Left cardiac atrium (tissue), 4 donors: ENCODE measurements at regions of chr11 and their contacts with region 1.

Region 1: GRCh38 chr11:1694064-1694845 is 2.7 kb upstream of the KRTAP5-6 start:
- DNase-seq: peak; percentile 88
- ATAC-seq: peak; percentile 97

Region 2: DNA sequence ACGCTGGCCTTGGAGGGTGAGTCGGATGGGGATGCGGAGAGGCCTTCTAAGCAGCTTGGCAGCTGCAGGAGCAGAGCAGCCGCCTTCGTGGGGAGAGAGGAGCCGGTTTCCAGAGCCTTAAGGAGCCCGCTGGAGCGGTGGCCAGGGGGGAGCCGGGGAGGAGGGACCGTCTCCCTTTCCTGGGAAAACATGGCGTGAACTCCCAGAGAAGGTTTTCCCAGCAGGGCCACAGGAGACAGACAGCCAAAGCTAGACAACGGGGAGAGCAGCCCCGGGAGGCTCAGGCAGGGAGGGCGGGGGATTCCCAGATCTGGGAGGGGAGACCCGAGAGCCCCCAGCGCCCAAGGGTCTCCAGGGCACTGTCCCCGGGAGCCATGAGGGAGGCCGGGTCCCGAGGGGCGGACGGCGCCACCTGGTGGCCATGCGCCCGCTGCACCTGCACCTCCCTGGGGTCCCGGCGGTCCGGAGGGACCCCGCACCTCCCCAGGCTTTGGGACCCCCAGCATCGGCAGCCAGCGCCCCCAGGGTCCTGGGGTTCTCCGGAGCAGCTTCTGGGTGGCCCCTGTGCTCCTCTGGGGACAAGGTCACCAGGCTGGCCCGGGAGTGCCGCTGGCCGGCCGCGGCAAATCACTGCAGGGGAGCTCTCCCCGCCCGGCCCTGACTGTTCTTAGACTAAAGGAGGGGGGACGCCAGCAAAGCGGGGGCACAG is 138.1 kb after region 1 on chr11:
- intact Hi-C with region 1: loop called (anchors 1 to 2 kb)
- DNase-seq: peak; percentile 60
- ATAC-seq: peak; percentile 71 to 74